WTC11 (cell line): ENCODE measurements at regions of chr14 and their contacts with region 1.

Region 1: DNA sequence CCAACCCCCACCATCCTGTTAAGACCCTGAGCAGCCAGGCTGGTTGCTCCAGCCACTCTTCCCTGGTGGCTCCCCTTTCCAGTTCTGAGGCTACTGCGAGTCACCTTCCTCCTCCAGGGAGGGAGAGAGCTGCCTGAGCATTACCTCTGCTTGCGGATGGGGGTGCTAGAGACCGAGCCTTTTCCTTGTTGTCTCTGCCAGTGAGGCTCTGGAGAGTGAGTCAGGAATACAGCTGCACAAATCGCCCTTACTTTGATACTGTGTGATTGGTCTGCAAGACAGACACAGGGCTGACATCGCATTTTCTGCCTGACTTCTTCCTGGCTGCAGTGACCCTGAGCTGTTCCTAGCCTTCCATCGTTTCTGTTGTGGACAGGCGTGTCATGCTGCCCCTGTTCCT is 94.3 kb downstream of the SLC25A47 start:
- DNase-seq: peak; percentile 79
- ATAC-seq: peak; percentile 98
- H3K4me3 Mint-ChIP-seq: no peak overlapping the region
- H3K27ac Mint-ChIP-seq: peak overlapping the region; percentile 70; the same call in 1 of the 2 replicates
- H3K4me1 Mint-ChIP-seq: peaks cover 13% of the 10 kb centered on the region
- H3K27me3 Mint-ChIP-seq: no peaks in the 10 kb centered on the region
- CTCF ChIP-seq: peak; percentile 59

Region 2: DNA sequence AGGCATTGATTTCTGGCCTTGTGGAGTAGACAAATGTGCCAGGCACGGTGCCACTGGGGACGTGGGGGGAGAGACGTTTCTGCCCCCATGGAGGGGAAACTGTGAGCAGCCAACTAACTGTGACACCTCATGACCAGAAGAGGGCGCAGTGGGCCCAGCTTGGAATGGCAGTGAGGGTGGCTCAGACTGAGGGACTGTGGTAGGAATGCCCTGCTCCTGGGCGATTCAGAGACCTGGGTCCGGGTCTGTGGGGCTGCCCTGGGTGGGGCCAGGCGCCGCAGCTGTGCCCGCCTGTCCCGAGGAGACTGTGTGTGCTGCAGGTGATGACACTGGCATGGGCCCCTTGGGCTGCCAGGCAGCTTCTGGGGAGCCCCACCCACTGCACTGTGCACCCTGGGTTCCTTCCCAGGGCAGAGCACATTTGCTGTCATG is 33.7 kb before region 1 on chr14:
- CTCF ChIA-PET with region 1: interaction called, 49 read pairs
- POLR2A ChIA-PET with region 1: no interaction called
- DNase-seq: peak; percentile 77
- ATAC-seq: peak; percentile 94
- H3K4me3 Mint-ChIP-seq: no peak overlapping the region
- H3K27ac Mint-ChIP-seq: no peak overlapping the region
- H3K4me1 Mint-ChIP-seq: peaks cover 35% of the 10 kb centered on the region
- H3K27me3 Mint-ChIP-seq: no peaks in the 10 kb centered on the region
- CTCF ChIP-seq: peak; percentile 84

Region 3: DNA sequence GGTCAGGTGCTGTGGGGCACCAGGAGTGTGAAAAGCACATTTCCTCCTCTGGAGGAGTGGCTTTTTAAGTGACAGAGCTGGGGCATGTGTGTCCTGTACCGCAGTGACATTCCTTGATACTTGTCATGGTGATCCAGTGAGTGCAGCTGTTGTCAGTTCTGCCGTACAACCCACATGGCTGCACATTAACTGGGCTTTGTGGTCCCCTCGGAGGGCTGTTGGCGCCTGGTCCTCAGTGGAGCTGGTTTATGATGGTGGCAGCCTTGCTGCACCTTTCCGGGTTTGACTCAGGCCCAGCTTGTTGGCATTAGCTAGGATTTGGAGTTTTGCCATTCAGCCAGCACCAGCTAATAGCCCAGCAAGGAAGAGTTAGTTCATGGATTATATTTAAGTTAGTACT is 17.4 kb before region 1 on chr14:
- CTCF ChIA-PET with region 1: interaction called, 17 read pairs
- POLR2A ChIA-PET with region 1: no interaction called
- DNase-seq: no peak
- ATAC-seq: no peak
- H3K4me3 Mint-ChIP-seq: no peak overlapping the region
- H3K27ac Mint-ChIP-seq: 0 out of 2 replicates have a peak overlapping the region, but pooled peaks have one; percentile 11
- H3K4me1 Mint-ChIP-seq: peaks cover 65% of the 10 kb centered on the region
- H3K27me3 Mint-ChIP-seq: no peaks in the 10 kb centered on the region
- CTCF ChIP-seq: no peak

Region 4: GRCh38 chr14:100440187-100440631 is 22.7 kb after region 1 on chr14:
- CTCF ChIA-PET with region 1: interaction called, 17 read pairs
- POLR2A ChIA-PET with region 1: no interaction called
- DNase-seq: peak; percentile 72
- ATAC-seq: peak; percentile 83
- H3K4me3 Mint-ChIP-seq: no peak overlapping the region
- H3K27ac Mint-ChIP-seq: 0 out of 2 replicates have a peak overlapping the region, but pooled peaks have one; percentile 43
- H3K4me1 Mint-ChIP-seq: peaks cover 33% of the 10 kb centered on the region
- H3K27me3 Mint-ChIP-seq: no peaks in the 10 kb centered on the region
- CTCF ChIP-seq: no peak

Region 5: DNA sequence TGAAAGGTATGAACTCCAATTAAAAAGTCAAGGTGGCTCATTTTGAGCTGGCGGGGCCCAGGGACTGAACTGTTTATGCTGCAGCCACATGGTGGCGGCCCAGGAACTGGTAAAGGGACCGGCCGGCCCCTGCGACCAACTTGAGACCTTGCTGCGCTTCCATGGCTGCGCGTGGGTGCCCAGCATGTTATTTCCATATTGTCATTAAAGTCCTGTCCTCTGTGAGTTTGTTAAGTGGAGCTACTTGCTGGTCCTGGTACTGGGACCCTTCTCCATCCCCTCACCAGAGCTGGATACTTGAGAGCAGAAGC is 107.4 kb after region 1 on chr14:
- CTCF ChIA-PET with region 1: interaction called, 23 read pairs
- POLR2A ChIA-PET with region 1: no interaction called
- DNase-seq: peak; percentile 76
- ATAC-seq: peak; percentile 82
- H3K4me3 Mint-ChIP-seq: no peak overlapping the region
- H3K27ac Mint-ChIP-seq: no peak overlapping the region
- H3K4me1 Mint-ChIP-seq: peaks cover 2% of the 10 kb centered on the region; the same call in 1 of the 2 replicates
- H3K27me3 Mint-ChIP-seq: no peaks in the 10 kb centered on the region
- CTCF ChIP-seq: peak; percentile 60; the same call in 1 of the 2 replicates

Region 6: DNA sequence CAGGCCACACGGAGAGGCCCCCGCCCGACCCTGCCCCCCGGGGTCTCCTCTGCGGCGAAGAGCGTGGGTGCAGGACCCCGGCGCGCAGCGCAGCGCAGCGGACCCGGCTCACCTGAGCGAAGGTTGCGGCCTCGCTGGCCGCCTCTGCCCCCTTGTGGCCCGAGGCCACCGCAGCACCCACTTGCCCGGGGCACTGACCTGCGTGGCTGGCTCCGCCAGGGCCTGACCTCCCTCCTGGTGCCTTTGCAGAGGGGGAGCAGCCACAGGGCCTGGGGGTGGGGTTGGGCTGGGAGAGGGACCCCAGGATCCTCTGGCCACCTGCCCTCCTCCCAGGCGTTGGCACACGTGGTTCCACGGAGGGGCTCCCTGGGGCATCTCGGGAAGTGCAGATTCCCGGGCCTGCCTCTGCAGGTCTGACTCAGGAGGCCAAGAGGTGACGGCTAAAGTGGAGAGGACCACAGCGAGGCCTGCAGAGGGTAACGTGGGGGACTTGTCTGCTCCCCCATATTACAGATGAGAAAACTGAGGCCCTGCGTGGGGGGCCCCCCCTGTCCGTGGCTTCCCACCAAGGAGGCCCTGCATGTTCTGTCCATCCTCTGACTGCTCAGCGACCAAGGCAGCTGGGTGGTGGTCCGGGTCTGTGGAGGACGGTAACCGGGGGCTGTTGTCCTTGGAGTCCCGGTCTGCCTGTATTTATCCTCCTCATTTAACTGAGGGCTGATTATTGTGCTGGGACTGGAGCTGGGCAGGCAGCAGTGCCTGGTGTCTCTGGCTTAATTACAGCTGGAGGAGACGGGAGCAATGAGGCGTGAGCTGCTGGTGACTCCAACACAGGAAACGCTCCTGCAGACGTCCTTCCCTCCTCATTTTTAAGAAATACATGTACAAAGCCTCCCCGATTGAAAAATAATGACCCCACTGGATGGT is 237.6 kb after region 1 on chr14:
- CTCF ChIA-PET with region 1: interaction called, 16 read pairs
- POLR2A ChIA-PET with region 1: no interaction called
- DNase-seq: peak; percentile 76
- ATAC-seq: peak; percentile 71
- H3K4me3 Mint-ChIP-seq: no peak overlapping the region
- H3K27ac Mint-ChIP-seq: no peak overlapping the region
- H3K4me1 Mint-ChIP-seq: peaks cover 19% of the 10 kb centered on the region
- H3K27me3 Mint-ChIP-seq: peaks cover 15% of the 10 kb centered on the region
- CTCF ChIP-seq: peak; percentile 74